ENCODE measurements at regions of chr17 and their contacts with region 1.

Region 1: DNA sequence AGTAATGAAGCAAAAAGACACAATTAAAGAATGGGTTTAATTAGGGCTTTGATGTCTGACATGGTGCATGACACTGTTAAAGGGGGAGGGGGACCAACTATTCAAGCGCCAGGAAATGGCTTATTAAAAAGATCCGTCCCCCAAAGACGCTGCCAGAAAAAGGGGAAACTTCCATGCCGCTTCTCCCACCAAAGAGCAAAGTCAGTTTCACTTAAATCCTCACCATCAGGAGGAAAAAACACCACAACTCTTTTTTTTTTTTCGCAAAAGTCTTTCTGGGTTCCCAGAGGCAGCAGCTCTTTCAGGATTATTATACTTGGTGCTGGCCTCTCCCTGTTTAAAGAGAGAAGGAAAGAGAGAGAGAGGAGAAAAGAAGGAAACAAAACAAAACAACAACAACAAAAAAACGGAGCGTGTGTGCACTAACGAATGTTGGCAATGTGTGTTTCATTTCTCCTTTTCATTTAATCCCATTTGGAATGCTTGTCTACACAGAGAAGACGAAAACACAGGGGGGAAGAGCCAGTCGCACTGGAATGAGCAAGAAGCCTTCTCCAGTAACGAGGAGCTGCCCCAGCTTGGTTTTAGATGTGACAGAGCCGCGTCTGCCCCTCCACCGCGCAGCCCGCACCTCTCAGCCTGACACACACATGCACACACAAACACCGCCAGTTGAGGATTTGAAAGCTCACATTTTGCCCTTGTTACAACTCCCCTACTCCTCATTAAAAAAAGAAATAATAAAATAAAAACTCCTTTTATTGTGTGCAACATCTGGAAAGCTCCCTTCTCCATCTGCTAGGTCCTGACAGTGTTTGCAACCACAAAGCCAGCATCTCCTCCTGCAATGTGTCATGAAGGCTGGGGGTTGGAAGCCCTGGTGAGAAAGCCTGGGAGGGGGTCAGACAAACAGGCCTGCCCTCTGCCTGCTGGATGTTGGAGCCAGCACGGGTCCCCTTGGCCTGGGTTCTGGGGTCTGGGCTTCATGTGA is 32.7 kb upstream of the AXIN2 start:
- DNase-seq: no peak
- H3K4me3 ChIP-seq: peak overlapping the region; percentile 21
- CTCF ChIP-seq: no peak

Region 2: GRCh38 chr17:65660947-65661346 is 66.8 kb after region 1 on chr17:
- in situ Hi-C with region 1: loop called (anchors 10 kb)
- DNase-seq: peak; percentile 5
- H3K4me3 ChIP-seq: no peak overlapping the region
- CTCF ChIP-seq: no peak

Measured in astrocyte of the cerebellum (primary cell).